Activated CD4-positive, alpha-beta T cell treated with anti-CD3 and anti-CD28 coated beads, Interleukin-2, amount 10 ng/mL, durations not matched to agents 24 days and 14 days (primary cell): ENCODE measurements at regions of chr3 and their contacts with region 1.

Region 1: DNA sequence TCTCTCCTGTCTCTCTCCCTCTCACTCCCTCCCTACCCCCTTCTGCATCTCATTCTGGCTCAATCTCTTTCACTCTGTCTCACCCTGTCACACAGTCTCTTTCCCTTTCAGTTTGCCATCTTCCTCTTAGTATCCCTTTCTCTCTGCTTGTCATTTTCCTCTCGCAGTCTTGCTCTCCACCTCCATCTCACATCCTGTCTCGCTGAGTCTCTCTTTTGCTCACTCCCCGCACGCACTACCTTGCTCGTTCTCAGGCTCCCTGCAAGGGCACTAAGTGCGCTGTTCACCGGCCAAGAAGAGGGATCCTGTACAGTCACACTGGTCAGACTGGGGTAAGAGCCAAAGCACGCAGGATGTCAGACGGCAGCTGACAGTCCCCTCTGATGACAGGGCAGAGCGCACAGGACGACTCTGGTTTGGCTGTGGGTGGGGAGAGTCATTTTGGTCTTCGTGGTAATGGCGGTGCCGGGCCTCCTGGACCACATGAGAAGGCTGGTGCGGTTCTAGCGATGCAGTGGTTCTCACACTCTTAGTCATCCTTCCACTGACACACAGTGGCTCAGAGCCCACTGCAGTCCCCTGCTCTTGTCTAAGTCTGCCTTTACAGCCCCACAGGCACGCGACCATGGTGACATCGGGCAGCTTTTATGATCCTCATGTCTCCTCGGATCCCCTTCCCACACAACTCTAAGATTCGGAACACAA is 356.8 kb downstream of the FOXP1 start:
- DNase-seq: peak; percentile 94
- H3K4me3 Mint-ChIP-seq: peak overlapping the region; percentile 85
- H3K27ac Mint-ChIP-seq: peak overlapping the region; percentile 95
- H3K4me1 Mint-ChIP-seq: peaks cover 41% of the 10 kb centered on the region
- H3K27me3 Mint-ChIP-seq: peaks cover 35% of the 10 kb centered on the region

Region 2: DNA sequence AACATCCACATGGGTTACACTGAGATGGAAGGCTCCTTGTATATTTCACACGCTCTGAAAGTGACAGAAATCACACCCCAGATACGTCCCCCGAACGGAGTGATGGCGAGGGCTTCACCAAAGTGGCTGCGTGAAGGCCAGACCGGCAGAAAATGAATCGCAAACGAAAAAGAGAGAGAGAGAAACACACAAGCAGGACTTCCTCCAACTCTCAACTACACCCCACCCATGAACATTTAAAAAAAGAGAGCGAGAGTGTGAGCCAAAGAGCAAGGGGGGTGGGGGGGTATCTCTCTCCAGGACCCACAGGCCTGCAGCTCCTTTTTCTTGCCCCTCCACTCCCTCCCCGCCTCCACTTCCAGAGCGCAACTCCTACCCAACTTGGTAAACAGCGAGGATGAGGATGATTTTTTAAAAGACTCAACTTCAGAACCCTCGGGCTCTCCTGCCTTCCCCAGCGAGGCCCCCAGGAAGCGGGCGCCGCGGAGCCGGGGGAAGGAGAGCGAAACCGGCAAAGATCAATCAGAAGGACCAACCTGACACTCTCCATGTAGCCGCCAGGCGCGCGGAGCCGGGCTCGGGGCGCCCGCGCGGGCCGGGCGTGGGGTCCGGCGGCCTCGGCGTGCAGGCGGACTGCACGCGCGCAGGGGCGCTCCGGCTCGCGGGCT is 162.3 kb before region 1 on chr3:
- intact Hi-C with region 1: loop called (anchors 1 kb)
- DNase-seq: peak; percentile 92
- H3K4me3 Mint-ChIP-seq: no peak overlapping the region
- H3K27ac Mint-ChIP-seq: no peak overlapping the region
- H3K4me1 Mint-ChIP-seq: peaks cover 55% of the 10 kb centered on the region
- H3K27me3 Mint-ChIP-seq: no peaks in the 10 kb centered on the region

Region 3: DNA sequence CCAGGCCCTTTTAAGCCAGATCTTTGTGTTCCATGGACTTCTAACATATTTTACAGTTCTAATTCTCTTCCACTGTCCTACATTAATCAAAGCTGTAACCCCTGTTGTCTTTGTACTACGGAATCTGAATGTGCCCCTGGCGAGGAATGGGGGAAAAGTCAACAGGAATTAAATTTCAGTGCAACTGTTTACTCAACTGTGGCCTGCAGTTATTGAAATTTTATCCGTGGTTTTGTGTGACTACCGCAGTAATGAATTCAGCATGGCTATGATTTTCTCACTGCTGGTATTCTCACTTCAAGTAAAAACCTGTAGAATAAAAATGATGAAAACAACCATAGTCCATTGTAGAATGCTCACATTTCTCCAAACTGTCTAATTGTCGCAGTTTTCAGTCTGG is 31.2 kb before region 1 on chr3:
- intact Hi-C with region 1: loop called (anchors 1 kb)
- DNase-seq: no peak
- H3K4me3 Mint-ChIP-seq: no peak overlapping the region
- H3K27ac Mint-ChIP-seq: no peak overlapping the region
- H3K4me1 Mint-ChIP-seq: peaks cover 25% of the 10 kb centered on the region
- H3K27me3 Mint-ChIP-seq: no peaks in the 10 kb centered on the region

Region 4: GRCh38 chr3:71243229-71243628 is 16.5 kb after region 1 on chr3:
- intact Hi-C with region 1: no loop called
- DNase-seq: no peak
- H3K4me3 Mint-ChIP-seq: no peak overlapping the region
- H3K27ac Mint-ChIP-seq: no peak overlapping the region
- H3K4me1 Mint-ChIP-seq: no peaks in the 10 kb centered on the region
- H3K27me3 Mint-ChIP-seq: peaks cover 4% of the 10 kb centered on the region

Region 5: DNA sequence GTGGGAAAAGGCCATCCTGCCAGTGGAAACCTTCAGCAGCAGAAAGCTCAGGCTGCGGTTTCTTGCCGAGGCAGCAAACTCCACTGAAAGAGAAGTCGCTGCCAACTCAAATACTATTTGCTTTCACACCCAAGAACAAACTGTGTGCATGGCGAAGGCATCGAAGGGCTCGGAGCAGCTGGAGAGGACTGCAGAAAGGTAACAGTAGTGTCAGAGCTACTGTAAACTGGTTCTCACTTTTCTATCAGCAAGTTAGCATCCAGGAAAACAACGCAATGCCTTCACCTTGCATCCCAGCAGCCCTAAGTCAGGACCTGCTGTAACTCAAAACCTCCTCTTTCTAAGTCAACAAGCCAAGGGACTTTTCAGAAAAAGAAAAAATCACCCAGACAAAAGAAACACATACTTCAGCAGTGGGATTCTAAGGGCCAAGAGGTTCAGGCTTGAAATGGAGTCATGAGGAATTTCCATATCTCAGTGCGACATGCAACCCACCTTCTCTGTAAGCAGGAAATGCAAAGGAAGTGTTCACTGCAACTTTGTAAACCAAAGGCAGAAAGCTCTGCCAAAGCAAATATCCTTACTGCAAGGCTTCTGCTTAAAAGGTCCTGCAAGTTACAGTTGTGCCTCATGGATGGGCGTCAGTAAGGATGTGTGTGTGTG is 163.3 kb after region 1 on chr3:
- intact Hi-C with region 1: loop called (anchors 2 kb)
- DNase-seq: peak; percentile 69
- H3K4me3 Mint-ChIP-seq: peak overlapping the region; percentile 46
- H3K27ac Mint-ChIP-seq: peak overlapping the region; percentile 62
- H3K4me1 Mint-ChIP-seq: peaks cover 34% of the 10 kb centered on the region
- H3K27me3 Mint-ChIP-seq: peaks cover 31% of the 10 kb centered on the region

Region 6: DNA sequence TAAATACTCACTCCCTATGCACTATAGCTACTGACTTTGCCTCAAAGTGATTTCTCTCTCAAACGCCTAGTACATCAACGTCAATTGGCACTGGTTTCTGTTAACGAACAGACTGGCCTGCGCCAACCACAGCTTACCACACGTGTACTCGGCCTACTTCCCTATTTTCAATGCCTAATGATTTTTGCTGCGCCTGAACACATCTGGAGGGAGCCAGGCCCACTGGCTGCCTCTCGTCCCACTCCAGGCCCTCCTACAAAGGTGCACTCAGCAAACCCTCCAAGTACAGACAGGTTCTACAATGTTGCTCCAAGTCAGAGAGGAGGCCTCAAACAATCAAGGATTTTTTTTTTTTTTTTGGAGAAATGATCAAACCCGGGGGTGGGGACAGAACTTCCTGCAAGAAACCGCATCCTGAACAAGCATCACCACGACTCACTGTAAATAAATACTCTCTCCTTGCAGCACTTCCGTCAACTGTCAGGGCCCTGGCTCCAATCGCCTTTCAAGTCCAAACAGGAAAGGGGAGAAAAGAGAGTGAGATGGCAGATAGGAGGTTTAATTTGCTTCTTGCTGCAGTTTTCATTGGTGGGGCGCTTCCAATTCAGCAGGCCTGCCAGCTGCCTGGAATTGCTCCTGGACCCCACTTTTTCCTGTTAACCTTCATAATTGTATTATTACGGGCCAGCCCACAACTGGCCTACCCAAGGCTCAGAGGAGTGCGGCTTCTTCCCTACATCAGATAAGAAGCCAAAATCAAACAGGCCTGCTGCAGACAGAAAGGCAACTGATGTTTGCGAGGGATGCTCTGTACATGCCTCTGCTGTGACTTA is 217.5 kb after region 1 on chr3:
- intact Hi-C with region 1: loop called (anchors 1 kb)
- DNase-seq: peak; percentile 93
- H3K4me3 Mint-ChIP-seq: peak overlapping the region; percentile 76
- H3K27ac Mint-ChIP-seq: peak overlapping the region; percentile 99
- H3K4me1 Mint-ChIP-seq: peaks cover 80% of the 10 kb centered on the region
- H3K27me3 Mint-ChIP-seq: no peaks in the 10 kb centered on the region